AG04449 (cell line): ENCODE measurements at regions of chr12 and their contacts with region 1.

Region 1: DNA sequence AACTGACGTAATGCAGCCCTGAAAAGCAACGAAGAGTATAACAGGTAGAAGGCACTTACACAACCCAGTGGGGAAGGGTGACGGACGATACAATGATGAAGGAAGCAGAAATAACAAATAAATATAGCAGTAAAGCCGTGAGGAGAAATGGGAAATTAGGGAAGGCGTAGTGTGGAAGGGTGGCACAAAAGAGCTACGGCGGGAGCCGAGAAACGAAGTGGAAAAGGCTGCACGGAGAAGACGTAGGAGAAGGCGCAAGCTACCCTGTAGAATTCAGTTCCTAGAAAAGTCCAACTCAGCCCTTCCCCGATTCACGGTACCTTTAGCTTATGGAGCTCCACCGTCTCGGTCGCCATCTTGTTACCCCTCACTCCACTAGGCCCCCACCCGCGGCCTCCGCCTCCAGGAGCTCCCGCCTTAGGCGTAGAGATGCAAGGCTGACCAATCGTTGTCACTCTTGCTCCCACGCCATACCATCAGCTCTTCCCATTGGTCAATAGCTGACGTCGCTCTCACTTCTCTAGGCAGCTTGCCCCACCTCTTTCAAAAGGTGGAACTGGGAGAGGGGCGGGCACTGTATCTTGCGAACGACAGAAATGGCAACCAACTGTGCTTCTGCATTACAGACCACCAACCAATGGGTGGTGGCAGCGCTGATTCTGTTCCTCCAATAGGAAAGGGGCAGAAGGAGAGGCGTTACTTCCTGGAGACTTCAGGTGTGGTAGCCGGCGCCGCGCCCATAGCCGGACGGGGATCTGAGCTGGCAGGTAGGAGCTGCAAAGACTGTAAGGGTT is at the starts of genes ORMDL2 and SARNP:
- DNase-seq: peak; percentile 99
- H3K4me3 ChIP-seq: peak within 1 kb of the TSS; percentile 92
- CTCF ChIP-seq: no peak

Region 2: DNA sequence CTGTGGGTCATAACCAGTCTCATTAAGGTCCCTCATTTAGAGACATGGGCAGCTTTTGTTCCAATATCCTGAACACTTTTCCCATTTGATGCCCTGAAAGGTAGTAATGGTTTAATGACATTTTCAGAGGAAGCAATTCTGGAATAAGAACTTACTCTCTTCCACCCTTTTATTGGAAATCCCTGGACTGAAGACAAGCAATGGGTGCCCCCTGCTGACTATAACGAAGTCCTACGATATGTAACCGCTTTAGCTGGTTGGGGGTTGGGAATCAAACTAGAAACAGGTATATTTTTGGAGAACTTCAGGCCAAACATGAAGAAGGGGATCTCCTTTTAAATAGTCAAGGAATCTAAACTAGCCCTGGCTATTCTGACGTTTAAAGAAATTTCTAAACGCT is 20.5 kb before region 1 on chr12:
- CTCF ChIA-PET with region 1: interaction called, 17 read pairs
- POLR2A ChIA-PET with region 1: no interaction called
- DNase-seq: no peak
- H3K4me3 ChIP-seq: no peak overlapping the region
- CTCF ChIP-seq: peak; percentile 54

Region 3: DNA sequence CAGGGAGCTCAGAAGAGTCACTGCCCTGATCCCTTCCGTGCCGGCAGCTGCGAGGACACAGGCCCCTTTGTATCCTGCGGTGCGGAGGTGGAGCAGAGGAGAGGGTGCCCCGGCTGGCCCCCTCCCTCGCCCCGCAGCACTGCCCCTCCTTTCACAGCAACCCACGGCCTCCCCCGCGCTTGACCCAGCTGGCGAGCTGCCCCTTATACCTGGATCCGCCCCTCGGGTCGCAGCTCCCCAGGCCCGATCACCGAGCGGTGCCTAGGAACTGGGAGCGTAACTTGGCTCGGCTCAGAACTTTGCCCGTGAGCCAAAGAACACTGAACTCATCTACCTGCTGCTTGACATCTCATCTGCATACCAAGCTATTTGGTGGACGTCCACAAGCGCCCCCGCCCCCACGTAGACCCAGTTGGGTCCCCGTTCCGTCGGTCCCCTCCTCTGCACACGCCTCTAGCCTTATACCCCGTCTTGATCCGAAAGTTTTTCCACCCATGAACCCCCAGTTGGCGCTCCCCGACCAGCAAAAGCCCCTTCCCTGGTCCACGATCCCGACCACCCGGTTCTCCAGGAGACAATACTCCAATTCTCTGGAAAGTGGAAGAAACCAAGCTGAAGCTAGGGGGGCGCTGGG is 12.5 kb after region 1 on chr12:
- CTCF ChIA-PET with region 1: interaction called, 20 read pairs
- POLR2A ChIA-PET with region 1: interaction called, 27 read pairs
- DNase-seq: no peak
- H3K4me3 ChIP-seq: peak overlapping the region; percentile 78
- CTCF ChIP-seq: no peak

Region 4: DNA sequence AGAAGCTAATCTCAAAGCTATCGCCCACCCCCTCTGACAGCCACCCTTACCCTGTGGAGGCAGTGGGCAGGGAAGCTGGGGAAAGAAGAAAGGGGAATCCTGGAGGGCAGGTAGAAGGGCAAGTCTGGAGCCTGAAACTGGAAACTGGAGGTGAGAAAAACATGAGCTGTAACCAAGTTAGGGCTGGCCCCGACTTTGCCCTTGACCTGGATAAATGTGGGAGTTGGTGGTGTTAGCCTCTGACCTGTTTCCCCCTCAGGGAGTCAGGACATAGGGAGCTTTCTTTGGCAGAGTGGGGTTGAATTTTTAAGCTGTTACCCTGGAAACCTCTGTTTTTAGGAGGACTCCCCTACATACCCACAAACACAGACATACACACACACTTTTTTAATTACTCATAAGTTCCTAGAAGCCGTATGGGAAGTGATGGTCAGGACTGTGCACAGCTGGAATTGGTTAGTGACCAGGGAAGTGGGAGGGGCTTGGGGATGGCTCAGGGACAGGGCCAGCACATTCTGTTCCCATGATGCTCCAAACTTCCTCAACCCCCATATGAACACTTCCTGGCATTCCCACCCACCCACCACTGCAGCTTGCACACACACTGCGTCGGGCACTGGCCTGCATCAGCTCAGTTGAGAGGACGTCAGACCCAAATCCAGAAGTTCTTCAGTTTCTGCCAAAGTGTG is 30.2 kb after region 1 on chr12:
- CTCF ChIA-PET with region 1: no interaction called
- POLR2A ChIA-PET with region 1: interaction called, 15 read pairs
- DNase-seq: peak; percentile 98
- H3K4me3 ChIP-seq: peak overlapping the region; percentile 47
- CTCF ChIP-seq: no peak